Activated CD4-positive, alpha-beta T cell treated with anti-CD3 and anti-CD28 coated beads, Interleukin-2, amount 10 ng/mL, durations not matched to agents 24 days and 14 days (primary cell): ENCODE measurements at regions of chr6 and their contacts with region 1.

Region 1: GRCh38 chr6:136317021-136317694 is 27.5 kb upstream of the BCLAF1 start:
- DNase-seq: peak; percentile 89
- H3K4me3 Mint-ChIP-seq: no peak overlapping the region
- H3K27ac Mint-ChIP-seq: no peak overlapping the region
- H3K4me1 Mint-ChIP-seq: peaks cover 1% of the 10 kb centered on the region
- H3K27me3 Mint-ChIP-seq: peaks cover 10% of the 10 kb centered on the region

Region 2: GRCh38 chr6:135451693-135452092 is 865.5 kb before region 1 on chr6:
- intact Hi-C with region 1: loop called (anchors 1 kb)
- DNase-seq: peak; percentile 63
- H3K4me3 Mint-ChIP-seq: no peak overlapping the region
- H3K27ac Mint-ChIP-seq: no peak overlapping the region
- H3K4me1 Mint-ChIP-seq: peaks cover 6% of the 10 kb centered on the region
- H3K27me3 Mint-ChIP-seq: no peaks in the 10 kb centered on the region

Region 3: DNA sequence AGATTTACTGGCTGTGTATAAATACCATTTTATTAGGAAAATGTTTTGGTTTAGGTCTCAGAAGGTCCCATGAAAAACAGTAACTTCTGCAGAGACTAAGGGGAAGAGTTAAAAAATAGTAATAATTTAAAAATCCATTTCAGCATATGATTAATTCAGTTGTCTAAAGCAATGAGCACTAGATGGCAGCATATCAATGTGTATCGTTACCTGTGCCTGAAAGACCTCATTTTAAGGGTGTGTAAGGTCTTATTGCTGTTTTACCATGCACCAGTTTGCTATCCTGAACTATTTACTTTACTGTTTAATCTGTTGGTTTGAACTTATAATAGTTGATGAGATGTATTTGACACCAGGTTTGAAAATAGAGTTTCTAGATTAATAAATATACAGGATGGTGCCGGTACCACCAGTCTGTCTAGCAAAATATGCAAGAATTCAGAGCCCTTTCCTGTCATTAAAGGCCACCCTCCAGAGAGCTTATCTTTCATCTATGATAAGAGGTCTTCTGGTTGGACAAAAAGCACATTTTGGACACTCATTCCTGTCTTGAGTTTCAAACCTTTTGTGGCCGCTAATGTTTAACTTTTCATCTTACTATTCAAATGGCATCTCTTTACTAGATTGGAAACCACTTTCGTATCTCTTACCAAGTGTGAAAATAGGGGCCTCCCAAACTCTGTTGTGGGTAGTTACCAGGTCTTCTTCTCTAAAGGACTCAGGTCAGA is 810.7 kb before region 1 on chr6:
- intact Hi-C with region 1: loop called (anchors 1 kb)
- DNase-seq: peak; percentile 79
- H3K4me3 Mint-ChIP-seq: no peak overlapping the region
- H3K27ac Mint-ChIP-seq: peak overlapping the region; percentile 77
- H3K4me1 Mint-ChIP-seq: peaks cover 9% of the 10 kb centered on the region
- H3K27me3 Mint-ChIP-seq: no peaks in the 10 kb centered on the region

Region 4: GRCh38 chr6:135675862-135676261 is 641.3 kb before region 1 on chr6:
- intact Hi-C with region 1: loop called (anchors 1 kb)
- DNase-seq: peak; percentile 85
- H3K4me3 Mint-ChIP-seq: peak overlapping the region; percentile 32
- H3K27ac Mint-ChIP-seq: peak overlapping the region; percentile 74
- H3K4me1 Mint-ChIP-seq: peaks cover 39% of the 10 kb centered on the region
- H3K27me3 Mint-ChIP-seq: no peaks in the 10 kb centered on the region

Region 5: GRCh38 chr6:136249811-136250685 is 67.1 kb before region 1 on chr6 and contains the start of gene MTFR2:
- intact Hi-C with region 1: loop called (anchors 2 kb)
- DNase-seq: peak; percentile 98
- H3K4me3 Mint-ChIP-seq: peak within 1 kb of the TSS; percentile 97
- H3K27ac Mint-ChIP-seq: peak within 1 kb of the TSS; percentile 91
- H3K4me1 Mint-ChIP-seq: peaks cover 52% of the 10 kb centered on the region
- H3K27me3 Mint-ChIP-seq: no peaks in the 10 kb centered on the region
- total RNA-seq, gene MTFR2: 24.4 and 24.6 TPM in 2 replicates

Region 6: GRCh38 chr6:136289579-136290409 is 27.4 kb before region 1 on chr6 and contains the start of gene BCLAF1:
- intact Hi-C with region 1: loop called (anchors 2 kb)
- DNase-seq: peak; percentile 100
- H3K4me3 Mint-ChIP-seq: peak within 1 kb of the TSS; percentile 92
- H3K27ac Mint-ChIP-seq: peak within 1 kb of the TSS; percentile 100
- H3K4me1 Mint-ChIP-seq: peaks cover 41% of the 10 kb centered on the region
- H3K27me3 Mint-ChIP-seq: peaks cover 2% of the 10 kb centered on the region
- total RNA-seq, gene BCLAF1: 267 TPM in 2 replicates

Region 7: DNA sequence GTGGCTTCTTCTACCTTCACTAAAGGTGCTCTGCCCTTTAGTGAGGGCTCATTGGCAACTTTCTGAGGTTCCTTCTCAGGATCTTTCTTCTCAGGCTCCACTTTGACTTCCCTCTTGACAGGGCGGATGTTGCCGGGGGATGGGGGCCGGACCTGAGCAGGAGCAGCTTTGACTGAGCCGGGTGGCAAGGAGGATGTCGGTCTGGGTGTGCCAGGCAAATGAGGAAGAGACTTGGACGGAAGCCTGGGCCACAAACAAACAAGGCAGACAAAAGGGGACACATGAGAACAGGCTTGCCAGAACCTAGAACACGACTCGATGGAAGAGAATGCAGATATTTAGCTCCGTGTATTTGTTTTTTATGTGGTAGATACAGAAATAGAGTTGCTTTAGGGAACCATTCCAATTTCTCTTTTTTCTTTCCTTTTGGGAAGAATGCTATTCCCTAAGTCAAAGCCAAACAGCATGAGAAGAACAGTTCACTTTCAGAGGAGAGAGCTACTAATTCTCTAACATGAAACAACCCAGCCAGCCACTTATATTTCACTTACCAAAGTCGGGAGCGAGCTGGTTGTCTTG is 48.7 kb after region 1 on chr6:
- intact Hi-C with region 1: no loop called
- DNase-seq: peak; percentile 73
- H3K4me3 Mint-ChIP-seq: peak overlapping the region; percentile 31
- H3K27ac Mint-ChIP-seq: no peak overlapping the region
- H3K4me1 Mint-ChIP-seq: peaks cover 7% of the 10 kb centered on the region
- H3K27me3 Mint-ChIP-seq: peaks cover 19% of the 10 kb centered on the region